Heart right ventricle (tissue), 16 donors: ENCODE measurements at regions of chr14 and their contacts with region 1.

Region 1: DNA sequence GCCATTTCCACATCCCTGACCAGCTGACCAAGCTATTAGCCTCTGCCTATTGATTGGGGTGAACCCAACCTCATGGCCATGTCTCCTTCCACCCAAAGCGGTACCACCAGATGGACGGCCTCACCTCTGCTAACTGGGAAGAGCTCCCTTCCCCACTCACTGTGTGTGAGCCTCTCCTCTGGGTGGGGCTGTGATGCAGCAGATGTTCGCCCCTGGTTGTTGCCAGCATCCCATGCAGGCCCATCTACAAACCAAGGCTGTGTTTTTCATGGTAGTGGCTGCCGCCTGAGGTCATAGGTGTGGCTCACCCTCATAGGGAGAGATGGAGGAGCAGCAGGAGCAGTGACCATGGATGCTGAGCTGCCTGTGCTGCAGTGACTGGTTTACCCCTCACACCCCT is 47.6 kb upstream of the RD3L start:
- DNase-seq: no peak
- ATAC-seq: no peak
- H3K4me3 ChIP-seq: no peak overlapping the region
- H3K27ac ChIP-seq: no peak overlapping the region
- H3K4me1 ChIP-seq: no peaks in the 10 kb centered on the region
- H3K27me3 ChIP-seq: peaks cover 0 to 4% (median 0%) of the 10 kb centered on the region in 7 donors
- CTCF ChIP-seq: no peak

Region 2: DNA sequence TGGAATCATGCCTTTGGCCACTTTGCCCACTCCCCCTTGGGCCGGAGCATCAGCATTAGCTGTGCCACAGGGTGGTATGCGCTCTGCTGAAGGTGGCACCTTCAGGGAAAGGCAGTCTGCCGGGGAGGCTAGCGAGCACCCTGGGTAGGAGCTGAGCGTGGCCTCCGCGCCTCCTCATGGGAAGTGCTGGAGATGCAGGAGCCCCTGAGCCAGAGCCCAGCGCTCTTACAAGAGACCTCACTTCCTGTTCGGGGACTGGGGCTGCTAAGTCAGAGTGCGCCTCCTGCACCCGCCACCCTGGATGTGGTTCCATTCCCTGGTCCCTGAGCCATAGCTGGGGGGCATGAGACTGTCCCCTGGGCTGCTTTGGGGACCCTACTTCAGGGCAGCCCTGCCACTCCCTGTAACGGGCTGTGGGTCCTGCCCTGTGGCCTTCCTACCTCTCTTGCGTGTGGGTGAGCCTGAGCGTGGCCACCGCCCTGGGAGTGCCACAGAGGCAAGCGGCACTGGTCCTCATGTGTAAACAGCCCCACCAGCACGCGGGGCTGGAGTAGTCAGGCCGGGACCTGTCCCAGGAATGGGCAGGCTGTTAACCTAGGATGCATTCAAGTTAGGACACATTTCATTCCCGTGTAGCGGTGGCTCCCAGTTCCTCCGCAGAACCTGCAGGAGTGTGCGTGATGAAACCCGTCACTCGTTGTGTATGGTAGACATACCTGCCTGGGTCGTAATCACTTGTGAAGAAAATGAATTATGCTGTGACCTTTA is 407.8 kb before region 1 on chr14:
- intact Hi-C with region 1: loop called in 3 of 10 experiments (anchors 10 kb)
- DNase-seq: no peak
- ATAC-seq: peak in 4 of 8 donors; percentile 16 to 33 (median 18)
- H3K4me3 ChIP-seq: no peak overlapping the region
- H3K27ac ChIP-seq: no peak overlapping the region
- H3K4me1 ChIP-seq: peaks cover 0 to 4% (median 2%) of the 10 kb centered on the region in 9 donors
- H3K27me3 ChIP-seq: no peaks in the 10 kb centered on the region
- CTCF ChIP-seq: no peak

Region 3: DNA sequence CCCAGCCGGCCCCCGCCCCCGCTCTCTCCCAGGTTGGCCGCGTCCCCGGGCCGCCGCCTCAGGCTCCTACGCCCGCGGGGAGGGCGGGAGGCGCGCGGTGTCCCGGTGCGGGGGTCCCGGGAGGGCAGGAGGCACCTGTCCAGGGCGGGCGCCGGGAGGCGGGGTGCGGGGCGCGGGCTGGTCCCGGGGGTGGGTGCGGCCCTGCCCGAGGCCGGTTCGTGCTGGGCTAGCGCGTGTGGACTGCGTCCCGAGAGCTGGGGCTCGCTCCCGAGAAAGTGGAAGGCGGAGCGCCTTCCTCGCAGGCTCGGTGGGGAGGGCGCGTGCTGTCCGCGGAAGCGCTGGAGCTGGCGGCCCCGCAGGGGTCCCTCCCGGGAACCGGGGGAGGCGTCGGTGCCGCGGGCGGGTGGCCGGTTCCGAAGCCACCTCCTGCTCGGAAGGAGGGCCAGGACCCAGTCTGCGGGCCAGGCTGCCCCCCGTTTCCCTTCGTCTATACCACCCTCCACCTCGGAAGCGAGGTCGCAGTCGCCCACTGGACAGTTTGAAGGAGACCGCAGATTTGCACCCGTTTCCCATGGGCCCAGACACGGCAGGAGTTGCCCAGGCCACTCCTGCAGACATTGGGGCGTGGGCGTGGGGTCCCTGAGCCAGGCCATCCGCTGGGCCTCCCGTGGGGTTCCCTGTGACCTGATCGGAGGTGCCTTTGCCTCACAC is 273.7 kb before region 1 on chr14:
- intact Hi-C with region 1: no loop called
- DNase-seq: peak in 1 of 2 donors; percentile 53
- ATAC-seq: peak in 1 of 8 donors; percentile 1
- H3K4me3 ChIP-seq: peak overlapping the region; percentile 75 to 99 (median 80)
- H3K27ac ChIP-seq: peak overlapping the region; percentile 72 to 92 (median 88)
- H3K4me1 ChIP-seq: peaks cover 23 to 72% (median 58%) of the 10 kb centered on the region in 9 donors
- H3K27me3 ChIP-seq: no peaks in the 10 kb centered on the region
- CTCF ChIP-seq: no peak